Left colon (tissue), 2 donors: ENCODE measurements at regions of chr2 and their contacts with region 1.

Region 1: GRCh38 chr2:135913727-135914365 is 37.6 kb upstream of the MCM6 start:
- DNase-seq: peak in 1 of 2 donors; percentile 26
- ATAC-seq: no peak

Region 2: DNA sequence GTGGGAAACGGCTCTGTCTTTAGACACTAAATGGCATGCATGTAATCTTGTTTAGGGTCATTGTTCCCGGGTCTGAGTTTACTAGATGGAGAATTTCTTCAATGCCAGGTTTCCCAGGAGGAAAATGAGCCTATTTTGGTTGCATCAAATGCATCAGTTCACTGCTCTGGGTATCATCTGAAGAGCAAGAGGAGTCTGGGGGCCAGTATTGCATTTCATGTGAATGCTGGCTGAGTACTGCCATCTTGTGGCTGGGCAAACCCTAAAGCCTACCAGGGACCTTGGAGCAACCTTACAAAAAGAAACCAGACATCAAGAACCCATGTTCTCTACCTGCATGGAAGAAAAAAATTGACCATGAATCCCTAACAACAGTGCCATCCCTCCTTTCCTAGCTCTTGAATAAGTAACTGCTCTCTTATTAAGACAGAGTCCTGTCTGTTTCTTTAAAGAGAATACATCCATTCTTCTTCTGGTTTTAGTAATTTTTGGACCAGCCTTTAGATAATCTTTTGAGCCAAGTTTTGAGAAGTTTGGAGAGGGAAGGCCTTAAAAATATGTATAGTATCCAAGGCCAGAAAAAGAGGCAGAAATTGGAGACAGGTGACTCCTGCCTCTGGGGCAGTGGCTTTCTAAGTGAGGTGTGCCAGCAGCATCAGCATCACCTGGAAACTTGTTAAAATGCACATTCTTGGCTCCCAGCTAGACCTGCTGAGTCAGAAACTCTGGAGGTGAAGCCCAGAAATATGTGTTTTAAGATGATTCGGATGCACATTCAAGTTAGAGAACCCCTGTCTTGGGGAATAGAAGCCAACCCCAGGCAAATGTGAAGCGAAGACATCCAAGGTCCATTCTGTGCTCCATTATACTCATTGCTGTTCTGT is 465.1 kb after region 1 on chr2:
- intact Hi-C with region 1: loop called (anchors 5 to 10 kb)
- DNase-seq: peak; percentile 35 to 68
- ATAC-seq: peak; percentile 50

Region 3: GRCh38 chr2:136384531-136385303 is 470.9 kb after region 1 on chr2:
- intact Hi-C with region 1: loop called (anchors 5 to 10 kb)
- DNase-seq: peak in 1 of 2 donors; percentile 18
- ATAC-seq: peak; percentile 64